ENCODE measurements at regions of chr6 and their contacts with region 1.

Region 1: GRCh38 chr6:124854338-124854922 is 107.8 kb upstream of the RNF217 start:
- DNase-seq: no peak
- ATAC-seq: no peak
- H3K4me3 ChIP-seq: no peak overlapping the region
- H3K27ac ChIP-seq: no peak overlapping the region
- H3K4me1 ChIP-seq: no peaks in the 10 kb centered on the region
- H3K27me3 ChIP-seq: no peaks in the 10 kb centered on the region
- CTCF ChIP-seq: peak in 1 of 3 experiments; percentile 37; a peak in 2 of 6 replicates
- EP300 ChIP-seq: no peak
- POLR2A ChIP-seq: no peak
- RAD21 ChIP-seq: peak in 1 of 2 experiments; percentile 56; a peak in 3 of 4 replicates

Region 2: GRCh38 chr6:123802697-123803496 is 1051.5 kb before region 1 on chr6:
- CTCF ChIA-PET with region 1: no interaction called
- POLR2A ChIA-PET with region 1: no interaction called
- in situ Hi-C with region 1: no loop called
- intact Hi-C with region 1: loop called (anchors 10 kb)
- DNase-seq: peak; percentile 37 to 56 (median 50)
- ATAC-seq: peak; percentile 86
- H3K4me3 ChIP-seq: no peak overlapping the region
- H3K27ac ChIP-seq: no peak overlapping the region
- H3K4me1 ChIP-seq: no peaks in the 10 kb centered on the region
- H3K27me3 ChIP-seq: no peaks in the 10 kb centered on the region
- CTCF ChIP-seq: peak; percentile 43 to 57 (median 51); a peak in 5 of 6 replicates
- EP300 ChIP-seq: no peak
- POLR2A ChIP-seq: no peak
- RAD21 ChIP-seq: peak; percentile 23 to 53; a peak in 3 of 4 replicates

Region 3: DNA sequence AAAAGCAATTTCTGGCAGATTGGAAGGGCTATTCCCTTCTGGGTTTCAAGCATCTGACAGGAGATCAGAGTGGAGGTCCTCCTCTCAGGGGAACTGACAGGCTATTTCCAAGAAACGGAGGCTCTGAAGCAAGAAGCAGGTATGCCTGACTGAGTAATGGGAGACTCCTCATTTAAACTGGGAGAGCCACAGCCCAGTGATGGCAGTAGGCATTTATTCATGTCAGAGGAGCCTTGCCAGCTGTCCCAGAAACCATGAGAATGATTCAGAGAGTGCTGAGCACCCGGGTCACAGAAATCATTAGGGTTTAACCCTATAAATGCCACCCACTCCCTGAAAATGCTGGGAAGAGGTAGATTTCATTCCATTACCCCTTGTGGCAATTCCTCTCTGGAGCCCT is 139.7 kb before region 1 on chr6:
- CTCF ChIA-PET with region 1: no interaction called
- POLR2A ChIA-PET with region 1: no interaction called
- in situ Hi-C with region 1: no loop called
- intact Hi-C with region 1: no loop called
- DNase-seq: no peak
- ATAC-seq: peak; percentile 37; the same call in 2 of the 3 replicates
- H3K4me3 ChIP-seq: no peak overlapping the region
- H3K27ac ChIP-seq: no peak overlapping the region
- H3K4me1 ChIP-seq: no peaks in the 10 kb centered on the region
- H3K27me3 ChIP-seq: no peaks in the 10 kb centered on the region
- CTCF ChIP-seq: no peak
- EP300 ChIP-seq: no peak
- POLR2A ChIP-seq: no peak
- RAD21 ChIP-seq: no peak